ENCODE measurements at regions of chr4 and their contacts with region 1.

Region 1: GRCh38 chr4:705278-706082 is at the start of gene PCGF3:
- DNase-seq: peak; percentile 89 to 99 (median 92)
- ATAC-seq: peak; percentile 99
- H3K4me3 ChIP-seq: peak within 1 kb of the TSS; percentile 84
- H3K4me3 Mint-ChIP-seq: peak within 1 kb of the TSS; percentile 68 to 96 (median 83)
- H3K27ac ChIP-seq: peak within 1 kb of the TSS; percentile 96
- H3K27ac Mint-ChIP-seq: peak within 1 kb of the TSS; percentile 40 to 93 (median 59)
- H3K4me1 ChIP-seq: peaks cover 9 to 11% of the 10 kb centered on the region in 2 donors
- H3K4me1 Mint-ChIP-seq: peaks cover 21 to 30% (median 23%) of the 10 kb centered on the region in 7 donors
- H3K27me3 ChIP-seq: no peaks in the 10 kb centered on the region
- H3K27me3 Mint-ChIP-seq: no peaks in the 10 kb centered on the region
- total RNA-seq, gene PCGF3: 32.7 to 66.8 (median 42.3) TPM

Region 2: GRCh38 chr4:242121-242848 is 463.2 kb before region 1 on chr4:
- CTCF ChIA-PET with region 1: no interaction called
- POLR2A ChIA-PET with region 1: no interaction called
- intact Hi-C with region 1: loop called in 1 of 2 experiments (anchors 1 kb)
- DNase-seq: peak; percentile 43 to 80 (median 71)
- ATAC-seq: peak; percentile 100
- H3K4me3 ChIP-seq: peak overlapping the region; percentile 72
- H3K4me3 Mint-ChIP-seq: peak overlapping the region; percentile 66 to 95 (median 90)
- H3K27ac ChIP-seq: peak overlapping the region; percentile 58
- H3K27ac Mint-ChIP-seq: peak overlapping the region; percentile 80 to 89 (median 85)
- H3K4me1 ChIP-seq: no peaks in the 10 kb centered on the region
- H3K4me1 Mint-ChIP-seq: peaks cover 10 to 13% (median 11%) of the 10 kb centered on the region in 7 donors
- H3K27me3 ChIP-seq: no peaks in the 10 kb centered on the region
- H3K27me3 Mint-ChIP-seq: no peaks in the 10 kb centered on the region

Region 3: GRCh38 chr4:498328-498904 is 207.1 kb before region 1 on chr4:
- CTCF ChIA-PET with region 1: no interaction called
- POLR2A ChIA-PET with region 1: no interaction called
- intact Hi-C with region 1: loop called in 1 of 2 experiments (anchors 1 kb)
- DNase-seq: no peak
- ATAC-seq: peak; percentile 60
- H3K4me3 ChIP-seq: peak overlapping the region; percentile 96
- H3K4me3 Mint-ChIP-seq: peak overlapping the region; percentile 90 to 97 (median 94)
- H3K27ac ChIP-seq: peak overlapping the region; percentile 94
- H3K27ac Mint-ChIP-seq: peak overlapping the region; percentile 91 to 98 (median 97)
- H3K4me1 ChIP-seq: peaks cover 13 to 16% of the 10 kb centered on the region in 2 donors
- H3K4me1 Mint-ChIP-seq: peaks cover 19 to 53% (median 44%) of the 10 kb centered on the region in 7 donors
- H3K27me3 ChIP-seq: no peaks in the 10 kb centered on the region
- H3K27me3 Mint-ChIP-seq: no peaks in the 10 kb centered on the region

Region 4: DNA sequence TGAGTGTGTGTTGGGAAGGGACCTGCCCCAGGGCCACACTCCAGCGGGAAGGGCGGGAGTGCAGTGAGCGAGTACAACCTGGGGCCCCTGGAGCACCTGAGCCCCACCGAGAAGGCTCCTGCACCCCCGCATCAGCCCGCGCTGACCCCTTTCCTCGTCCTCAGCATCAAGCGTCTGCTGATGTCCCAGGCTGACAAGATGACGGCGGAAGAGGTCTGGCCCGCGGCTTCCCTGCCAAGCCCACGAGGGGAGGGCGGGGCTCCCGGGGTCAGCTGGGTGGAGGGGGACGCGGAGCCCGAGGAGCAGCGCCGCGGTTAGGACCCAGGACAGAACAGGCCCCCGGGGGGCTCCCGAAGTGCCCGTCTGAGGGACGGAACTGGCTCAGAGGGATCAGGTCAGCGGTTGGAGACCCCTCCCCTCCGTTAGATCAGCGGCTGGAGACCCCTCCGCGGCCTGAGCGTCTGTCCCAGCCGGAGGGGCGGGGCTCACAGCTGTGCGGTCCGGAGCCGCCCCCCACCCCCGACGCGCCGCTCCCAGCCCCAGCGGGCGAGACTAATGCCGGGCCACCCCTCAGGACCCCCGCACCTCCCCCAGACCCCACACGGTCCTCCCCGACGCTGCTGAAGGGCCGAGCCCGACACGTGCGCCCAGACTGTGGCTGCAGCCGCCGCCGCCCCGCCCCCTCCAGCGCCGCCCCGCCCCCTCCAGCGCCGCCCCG is 24.4 kb before region 1 on chr4:
- CTCF ChIA-PET with region 1: no interaction called
- POLR2A ChIA-PET with region 1: no interaction called
- intact Hi-C with region 1: loop called in 1 of 2 experiments (anchors 1 kb)
- DNase-seq: peak in 3 of 9 donors; percentile 16 to 61 (median 28)
- ATAC-seq: peak; percentile 65
- H3K4me3 ChIP-seq: peak overlapping the region; percentile 47
- H3K4me3 Mint-ChIP-seq: peak overlapping the region in 9 of 10 donors; percentile 23 to 70 (median 52)
- H3K27ac ChIP-seq: peak overlapping the region; percentile 48
- H3K27ac Mint-ChIP-seq: no peak overlapping the region
- H3K4me1 ChIP-seq: peaks cover 0 to 4% of the 10 kb centered on the region in 2 donors
- H3K4me1 Mint-ChIP-seq: peaks cover 0 to 8% (median 2%) of the 10 kb centered on the region in 7 donors
- H3K27me3 ChIP-seq: peaks cover 0 to 2% of the 10 kb centered on the region in 2 donors
- H3K27me3 Mint-ChIP-seq: peaks cover 0 to 6% (median 0%) of the 10 kb centered on the region in 5 donors

Region 5: GRCh38 chr4:986879-987623 is 281.6 kb after region 1 on chr4 and contains the start of gene IDUA:
- CTCF ChIA-PET with region 1: no interaction called
- POLR2A ChIA-PET with region 1: no interaction called
- intact Hi-C with region 1: loop called in 1 of 2 experiments (anchors 1 kb)
- DNase-seq: peak; percentile 75 to 90 (median 84)
- ATAC-seq: peak; percentile 93
- H3K4me3 ChIP-seq: peak within 1 kb of the TSS; percentile 82
- H3K4me3 Mint-ChIP-seq: peak within 1 kb of the TSS; percentile 87 to 95 (median 92)
- H3K27ac ChIP-seq: peak within 1 kb of the TSS; percentile 78
- H3K27ac Mint-ChIP-seq: peak within 1 kb of the TSS; percentile 76 to 90 (median 85)
- H3K4me1 ChIP-seq: peaks cover 19 to 21% of the 10 kb centered on the region in 2 donors
- H3K4me1 Mint-ChIP-seq: peaks cover 11 to 34% (median 22%) of the 10 kb centered on the region in 7 donors
- H3K27me3 ChIP-seq: no peaks in the 10 kb centered on the region
- H3K27me3 Mint-ChIP-seq: no peaks in the 10 kb centered on the region
- total RNA-seq, gene IDUA: 42.3 to 72.4 (median 65.8) TPM

Region 6: GRCh38 chr4:1026115-1026514 is 320.6 kb after region 1 on chr4:
- CTCF ChIA-PET with region 1: no interaction called
- POLR2A ChIA-PET with region 1: no interaction called
- intact Hi-C with region 1: no loop called
- DNase-seq: peak in 1 of 9 donors; percentile 51
- ATAC-seq: peak; percentile 67
- H3K4me3 ChIP-seq: no peak overlapping the region
- H3K4me3 Mint-ChIP-seq: no peak overlapping the region
- H3K27ac ChIP-seq: no peak overlapping the region
- H3K27ac Mint-ChIP-seq: peak overlapping the region in 1 of 9 donors; percentile 17
- H3K4me1 ChIP-seq: no peaks in the 10 kb centered on the region
- H3K4me1 Mint-ChIP-seq: peaks cover 0 to 11% (median 3%) of the 10 kb centered on the region in 7 donors
- H3K27me3 ChIP-seq: no peaks in the 10 kb centered on the region
- H3K27me3 Mint-ChIP-seq: no peaks in the 10 kb centered on the region

Region 7: DNA sequence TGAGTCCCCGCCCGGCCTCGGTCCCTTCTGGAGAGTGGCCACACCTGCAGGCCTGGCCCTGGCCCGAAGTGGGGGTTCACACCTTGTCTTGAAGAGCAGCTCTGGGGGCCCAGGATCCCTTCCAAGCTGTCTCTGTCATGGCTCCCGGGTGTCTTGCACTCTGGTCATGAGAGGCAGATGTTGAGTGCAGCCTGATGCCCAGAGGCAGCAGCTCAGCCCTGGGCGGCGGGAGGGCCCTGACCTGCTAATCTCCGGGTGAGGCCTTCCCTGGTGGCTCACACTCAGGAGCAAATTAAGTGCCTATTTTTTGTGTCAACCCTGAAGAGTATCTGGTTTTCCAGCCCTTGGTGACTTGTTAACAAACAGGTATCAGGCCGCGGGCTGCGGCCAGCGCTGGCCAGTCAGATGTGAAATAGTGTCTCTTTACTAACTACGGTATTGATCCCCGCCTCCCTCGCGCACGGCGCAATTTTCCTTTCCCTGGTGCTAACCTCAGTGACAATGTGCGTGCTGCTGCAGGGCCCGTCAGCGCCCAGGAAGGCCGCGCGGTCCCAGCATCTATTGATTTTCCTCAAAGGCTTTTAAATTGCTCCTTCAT is 676.6 kb after region 1 on chr4:
- CTCF ChIA-PET with region 1: no interaction called
- POLR2A ChIA-PET with region 1: no interaction called
- intact Hi-C with region 1: no loop called
- DNase-seq: no peak
- ATAC-seq: no peak
- H3K4me3 ChIP-seq: no peak overlapping the region
- H3K4me3 Mint-ChIP-seq: no peak overlapping the region
- H3K27ac ChIP-seq: no peak overlapping the region
- H3K27ac Mint-ChIP-seq: no peak overlapping the region
- H3K4me1 ChIP-seq: no peaks in the 10 kb centered on the region
- H3K4me1 Mint-ChIP-seq: peaks cover 0 to 2% (median 0%) of the 10 kb centered on the region in 7 donors
- H3K27me3 ChIP-seq: no peaks in the 10 kb centered on the region
- H3K27me3 Mint-ChIP-seq: no peaks in the 10 kb centered on the region

Measured in naive thymus-derived CD4-positive, alpha-beta T cell (primary cell).